A549 (cell line): ENCODE measurements at regions of chr2 and their contacts with region 1.

Region 1: DNA sequence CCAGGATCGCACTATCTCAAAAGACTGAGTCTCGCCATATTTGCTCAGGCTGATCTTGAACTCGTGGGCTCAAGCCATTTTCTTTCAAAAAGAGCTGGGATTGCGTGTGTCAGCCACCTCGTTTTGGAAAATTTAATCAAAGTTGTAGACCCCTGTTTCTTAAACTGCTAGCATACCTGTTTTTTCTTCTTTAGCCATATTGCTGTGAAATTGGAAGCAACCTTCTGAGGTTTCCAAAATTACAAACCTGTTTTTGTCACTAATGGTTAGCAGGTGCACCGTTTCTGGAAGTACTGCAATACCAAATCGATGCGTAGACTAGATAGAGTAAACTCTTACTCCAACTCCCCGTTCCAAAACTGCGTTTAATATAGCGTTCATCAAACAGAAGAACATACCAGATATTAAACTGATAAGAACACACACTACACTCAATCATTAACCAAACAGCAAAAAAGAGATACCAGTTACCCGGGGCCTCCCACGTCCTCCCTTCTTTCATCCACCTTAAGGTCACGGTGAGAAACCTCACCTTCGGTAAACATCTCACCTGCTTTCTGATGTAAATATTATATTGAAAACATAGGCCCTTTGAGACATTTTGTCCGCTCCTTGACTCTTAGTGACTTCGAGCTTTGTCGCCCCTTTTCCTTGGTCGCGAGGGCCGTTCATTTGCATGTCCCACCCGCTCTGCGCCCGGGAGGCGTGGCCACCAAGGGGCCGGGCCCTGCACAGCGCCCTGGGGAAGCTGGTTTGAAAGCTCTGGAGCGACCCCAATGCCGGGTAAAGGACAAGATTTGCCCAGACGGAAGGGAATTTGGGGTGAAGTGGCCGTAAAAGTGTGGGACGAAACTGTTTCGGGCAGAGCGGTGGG is at the start of gene RNU2-63P:
- DNase-seq: peak; percentile 93
- ATAC-seq: peak; percentile 90 to 95
- H3K4me3 ChIP-seq: peak within 1 kb of the TSS; percentile 65
- H3K27ac ChIP-seq: peak within 1 kb of the TSS; percentile 90 to 95
- H3K4me1 ChIP-seq: peaks cover 12% of the 10 kb centered on the region
- CTCF ChIP-seq: no peak
- EP300 ChIP-seq: no peak; a peak in 1 of 5 replicates
- POLR2A ChIP-seq: peak; percentile 74
- RAD21 ChIP-seq: 0 out of 5 replicates have a peak, but pooled peaks of 1 of the 2 experiments have one; percentile 3
- polyA plus RNA-seq, gene RNU2-63P: 23.1 and 33.0 TPM in 2 replicates

Region 2: GRCh38 chr2:88003074-88003755 is 13.1 kb before region 1 on chr2:
- CTCF ChIA-PET with region 1: interaction called, 60 read pairs
- POLR2A ChIA-PET with region 1: interaction called, 3 read pairs
- DNase-seq: no peak
- ATAC-seq: no peak
- H3K4me3 ChIP-seq: no peak overlapping the region
- H3K27ac ChIP-seq: no peak overlapping the region
- H3K4me1 ChIP-seq: no peaks in the 10 kb centered on the region
- CTCF ChIP-seq: no peak
- EP300 ChIP-seq: no peak
- POLR2A ChIP-seq: no peak
- RAD21 ChIP-seq: no peak